Activated CD4-positive, alpha-beta memory T cell treated with anti-CD3 and anti-CD28 coated beads for 36 hours (primary cell): ENCODE measurements at regions of chr17 and their contacts with region 1.

Region 1: GRCh38 chr17:72556944-72557826 is 436.4 kb downstream of the SOX9 start:
- DNase-seq: peak; percentile 79
- H3K4me3 Mint-ChIP-seq: no peak overlapping the region
- H3K27ac Mint-ChIP-seq: no peak overlapping the region
- H3K4me1 Mint-ChIP-seq: no peaks in the 10 kb centered on the region
- H3K27me3 Mint-ChIP-seq: peaks cover 1% of the 10 kb centered on the region

Region 2: DNA sequence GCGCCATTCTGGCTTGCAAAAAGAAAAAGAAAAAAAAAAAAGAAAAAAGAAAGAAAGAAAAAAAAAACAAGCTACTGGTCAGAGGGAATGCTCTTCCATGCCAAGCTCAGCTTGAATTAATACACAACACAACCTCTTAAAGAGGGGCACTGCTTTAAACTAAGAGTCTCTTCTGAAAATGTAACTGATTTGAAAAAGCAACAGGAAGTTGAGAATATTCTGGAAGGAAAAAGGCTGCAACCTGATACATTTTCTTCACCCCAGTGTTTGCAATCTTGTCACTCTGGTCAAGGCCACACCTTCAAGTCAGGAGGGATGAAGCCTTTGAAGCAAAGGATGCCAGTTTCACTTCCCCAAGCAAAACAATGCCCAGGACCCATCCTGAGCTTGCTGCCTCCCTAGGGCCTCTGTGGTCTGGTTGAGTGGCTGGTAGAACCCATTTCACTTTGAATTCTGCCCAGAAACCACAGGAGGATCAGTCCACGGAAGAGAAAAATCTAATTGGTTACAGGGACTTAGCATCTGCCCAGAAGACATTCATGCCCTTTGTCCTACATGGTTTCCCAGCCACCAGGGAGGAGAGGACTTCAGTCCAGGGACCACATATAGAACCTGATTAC is 46.7 kb before region 1 on chr17:
- CTCF ChIA-PET with region 1: no interaction called
- POLR2A ChIA-PET with region 1: no interaction called
- intact Hi-C with region 1: no loop called
- DNase-seq: no peak
- H3K4me3 Mint-ChIP-seq: no peak overlapping the region
- H3K27ac Mint-ChIP-seq: no peak overlapping the region
- H3K4me1 Mint-ChIP-seq: no peaks in the 10 kb centered on the region
- H3K27me3 Mint-ChIP-seq: no peaks in the 10 kb centered on the region

Region 3: DNA sequence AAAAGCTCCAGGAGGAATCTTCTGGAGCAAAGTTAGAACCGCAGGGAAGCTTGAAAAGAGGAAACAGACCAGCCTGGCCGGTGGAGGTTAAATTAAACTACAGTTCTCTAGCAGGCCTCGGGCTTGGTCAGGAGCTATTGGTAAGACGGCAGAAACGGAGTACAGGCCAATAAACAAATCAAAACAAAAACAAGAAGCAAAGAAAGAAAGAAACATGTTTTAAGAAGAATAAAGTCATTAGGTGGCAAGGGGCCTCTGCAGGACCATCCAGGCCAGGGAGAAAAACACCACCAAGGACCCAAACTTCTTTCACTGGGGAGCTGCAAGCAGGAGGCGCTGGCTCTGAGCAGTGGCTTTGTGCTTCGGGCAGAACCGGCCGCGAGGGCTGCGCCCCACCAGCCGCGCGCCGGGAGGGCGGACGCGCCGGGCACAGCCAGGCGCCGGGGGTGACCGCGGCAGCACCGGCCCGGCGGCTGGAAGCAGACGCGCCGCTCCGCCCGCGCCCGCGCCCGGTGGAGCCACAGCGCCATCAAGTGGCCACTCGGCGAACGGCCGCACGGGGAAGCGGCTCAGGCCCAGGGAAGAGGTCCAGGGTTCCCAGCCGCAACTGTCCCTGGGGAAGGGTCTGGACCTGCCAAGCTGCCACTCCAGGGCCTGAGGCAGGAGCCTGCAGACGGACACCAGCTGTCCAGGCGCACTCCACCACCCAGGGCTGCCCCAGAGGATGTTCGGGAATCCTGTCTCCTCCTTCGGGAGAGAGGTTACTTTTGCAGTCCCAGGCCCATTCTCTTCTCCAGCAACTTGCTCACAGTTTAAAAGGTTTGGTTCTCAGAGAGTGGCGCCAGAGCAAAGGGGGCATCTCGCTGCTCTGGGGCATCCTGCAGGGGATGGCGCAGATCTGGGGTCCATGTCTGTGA is 16.9 kb before region 1 on chr17:
- CTCF ChIA-PET with region 1: interaction called, 15 read pairs
- POLR2A ChIA-PET with region 1: no interaction called
- intact Hi-C with region 1: no loop called
- DNase-seq: peak; percentile 73
- H3K4me3 Mint-ChIP-seq: no peak overlapping the region
- H3K27ac Mint-ChIP-seq: no peak overlapping the region
- H3K4me1 Mint-ChIP-seq: peaks cover 2% of the 10 kb centered on the region
- H3K27me3 Mint-ChIP-seq: peaks cover 21% of the 10 kb centered on the region

Region 4: GRCh38 chr17:72592242-72592966 is 35.2 kb after region 1 on chr17:
- CTCF ChIA-PET with region 1: interaction called, 19 read pairs
- POLR2A ChIA-PET with region 1: no interaction called
- intact Hi-C with region 1: loop called (anchors 2 kb)
- DNase-seq: peak; percentile 78
- H3K4me3 Mint-ChIP-seq: peak overlapping the region; percentile 82
- H3K27ac Mint-ChIP-seq: no peak overlapping the region
- H3K4me1 Mint-ChIP-seq: peaks cover 32% of the 10 kb centered on the region
- H3K27me3 Mint-ChIP-seq: peaks cover 35% of the 10 kb centered on the region

Region 5: GRCh38 chr17:72715906-72716572 is 158.9 kb after region 1 on chr17:
- CTCF ChIA-PET with region 1: interaction called, 12 read pairs
- POLR2A ChIA-PET with region 1: no interaction called
- intact Hi-C with region 1: no loop called
- DNase-seq: no peak
- H3K4me3 Mint-ChIP-seq: no peak overlapping the region
- H3K27ac Mint-ChIP-seq: no peak overlapping the region
- H3K4me1 Mint-ChIP-seq: peaks cover 23% of the 10 kb centered on the region
- H3K27me3 Mint-ChIP-seq: no peaks in the 10 kb centered on the region

Region 6: GRCh38 chr17:72901083-72901482 is 343.9 kb after region 1 on chr17:
- CTCF ChIA-PET with region 1: no interaction called
- POLR2A ChIA-PET with region 1: no interaction called
- intact Hi-C with region 1: no loop called
- DNase-seq: no peak
- H3K4me3 Mint-ChIP-seq: no peak overlapping the region
- H3K27ac Mint-ChIP-seq: no peak overlapping the region
- H3K4me1 Mint-ChIP-seq: no peaks in the 10 kb centered on the region
- H3K27me3 Mint-ChIP-seq: no peaks in the 10 kb centered on the region

Region 7: GRCh38 chr17:73156166-73156840 is 599.1 kb after region 1 on chr17:
- CTCF ChIA-PET with region 1: interaction called, 46 read pairs
- POLR2A ChIA-PET with region 1: no interaction called
- intact Hi-C with region 1: loop called (anchors 1 kb)
- DNase-seq: peak; percentile 73
- H3K4me3 Mint-ChIP-seq: no peak overlapping the region
- H3K27ac Mint-ChIP-seq: no peak overlapping the region
- H3K4me1 Mint-ChIP-seq: peaks cover 19% of the 10 kb centered on the region
- H3K27me3 Mint-ChIP-seq: peaks cover 26% of the 10 kb centered on the region

Region 8: DNA sequence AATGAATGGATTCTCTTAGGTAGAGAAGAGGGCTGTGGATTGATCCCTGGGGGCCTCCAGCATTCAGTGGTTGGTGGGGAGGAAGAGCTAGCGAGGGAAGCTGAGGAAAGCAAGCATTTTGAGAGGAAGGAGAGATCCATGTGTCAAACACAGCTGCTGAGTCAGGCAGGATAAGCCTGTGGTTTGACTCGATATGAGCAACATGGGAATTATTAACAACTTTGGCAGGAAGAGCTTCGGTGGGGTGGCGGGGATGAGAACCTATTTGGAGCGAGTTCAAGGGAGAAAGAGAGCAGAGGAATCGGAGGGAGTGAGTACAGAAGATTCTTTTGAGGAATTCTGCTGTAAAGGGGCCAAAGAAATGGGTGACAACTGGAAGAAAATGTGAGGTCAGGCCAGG is 814.1 kb after region 1 on chr17:
- CTCF ChIA-PET with region 1: interaction called, 62 read pairs
- POLR2A ChIA-PET with region 1: no interaction called
- intact Hi-C with region 1: loop called (anchors 2 kb)
- DNase-seq: no peak
- H3K4me3 Mint-ChIP-seq: no peak overlapping the region
- H3K27ac Mint-ChIP-seq: no peak overlapping the region
- H3K4me1 Mint-ChIP-seq: no peaks in the 10 kb centered on the region
- H3K27me3 Mint-ChIP-seq: peaks cover 6% of the 10 kb centered on the region